Caco-2 (cell line): ENCODE measurements at regions of chr5 and their contacts with region 1.

Region 1: DNA sequence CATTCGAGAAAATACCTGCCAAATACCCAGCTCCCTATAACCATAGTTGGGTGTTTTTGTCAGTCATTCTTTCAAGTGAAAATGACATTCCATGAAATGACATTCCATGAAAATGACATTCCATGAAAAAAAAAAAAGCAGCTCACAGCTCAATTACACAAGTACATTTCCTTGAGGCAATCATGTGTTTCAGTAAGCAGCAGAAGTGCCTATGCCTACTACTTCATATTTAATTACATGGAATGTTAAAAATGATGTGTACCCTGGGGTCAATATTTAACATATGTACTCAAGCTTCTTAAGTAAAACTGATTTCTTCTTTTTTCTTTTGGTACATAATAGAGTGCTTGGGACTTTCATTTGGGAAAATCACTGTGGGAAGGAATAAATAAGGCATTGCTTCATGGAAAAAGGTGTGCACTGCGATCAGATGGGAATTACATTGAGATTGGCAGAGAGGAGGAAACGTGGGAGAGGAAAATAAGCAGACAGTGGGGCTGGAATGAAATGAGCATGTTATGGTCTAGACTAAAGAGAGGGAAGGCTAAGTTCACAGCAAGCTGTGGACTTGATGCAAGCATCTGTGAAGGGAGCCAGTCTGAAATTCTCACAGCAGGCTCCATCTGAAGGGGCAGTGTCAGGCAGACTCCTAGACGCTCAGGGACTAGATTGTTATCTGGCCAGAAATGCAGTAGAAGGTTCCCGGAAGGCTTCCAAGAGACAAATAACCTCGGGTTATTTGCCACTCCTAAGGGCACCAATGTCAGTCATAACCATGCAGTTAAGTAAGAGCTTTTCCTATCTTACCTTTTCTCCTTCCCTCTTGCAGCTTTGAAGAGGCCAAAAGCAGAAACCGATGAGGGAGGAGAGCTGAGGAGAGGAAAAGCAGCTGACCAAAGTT is 15.2 kb upstream of the SPATA9 start:
- DNase-seq: peak; percentile 51 to 65
- H3K4me3 ChIP-seq: no peak overlapping the region
- H3K4me3 Mint-ChIP-seq: no peak overlapping the region
- H3K27ac Mint-ChIP-seq: peak overlapping the region; percentile 17
- H3K4me1 ChIP-seq: peaks cover 25% of the 10 kb centered on the region
- H3K4me1 Mint-ChIP-seq: peaks cover 10% of the 10 kb centered on the region
- H3K27me3 ChIP-seq: no peaks in the 10 kb centered on the region
- H3K27me3 Mint-ChIP-seq: no peaks in the 10 kb centered on the region
- CTCF ChIP-seq: no peak

Region 2: GRCh38 chr5:95460662-95461061 is 237.4 kb before region 1 on chr5:
- CTCF ChIA-PET with region 1: no interaction called
- POLR2A ChIA-PET with region 1: no interaction called
- intact Hi-C with region 1: no loop called
- DNase-seq: no peak
- H3K4me3 ChIP-seq: no peak overlapping the region
- H3K4me3 Mint-ChIP-seq: no peak overlapping the region
- H3K27ac Mint-ChIP-seq: no peak overlapping the region
- H3K4me1 ChIP-seq: no peaks in the 10 kb centered on the region
- H3K4me1 Mint-ChIP-seq: no peaks in the 10 kb centered on the region
- H3K27me3 ChIP-seq: no peaks in the 10 kb centered on the region
- H3K27me3 Mint-ChIP-seq: no peaks in the 10 kb centered on the region
- CTCF ChIP-seq: no peak

Region 3: DNA sequence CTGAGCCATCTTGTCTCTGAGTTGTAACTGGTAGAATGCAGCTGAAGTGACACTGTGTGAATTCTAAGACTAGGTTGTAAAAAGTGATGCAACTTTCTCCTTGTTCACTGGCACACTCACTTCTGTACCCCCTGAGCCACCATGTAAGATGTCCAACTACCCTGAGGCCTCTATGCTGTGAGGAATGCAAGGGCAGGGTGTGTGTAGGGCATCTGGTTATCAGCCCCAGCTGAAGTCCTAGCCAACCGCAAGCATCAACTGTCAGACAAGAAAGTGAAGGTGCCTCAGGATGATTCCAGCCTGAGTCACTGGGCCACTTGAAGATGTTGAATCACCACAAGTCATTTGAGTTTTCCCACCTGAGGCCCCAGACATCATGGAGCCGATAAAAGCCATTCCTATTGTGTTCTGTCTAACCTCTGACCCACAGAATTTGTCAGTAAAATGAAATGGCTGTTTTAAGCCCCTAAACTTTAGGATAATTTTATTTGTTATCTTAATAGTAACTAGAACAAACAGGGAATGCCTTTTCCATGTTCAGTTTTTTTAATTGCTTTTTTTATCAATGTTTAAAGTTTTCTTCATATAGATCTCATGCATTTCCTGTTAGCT is 14.4 kb after region 1 on chr5:
- CTCF ChIA-PET with region 1: no interaction called
- POLR2A ChIA-PET with region 1: no interaction called
- intact Hi-C with region 1: loop called (anchors 2 kb)
- DNase-seq: peak; percentile 83 to 95
- H3K4me3 ChIP-seq: no peak overlapping the region
- H3K4me3 Mint-ChIP-seq: peak overlapping the region; percentile 52
- H3K27ac Mint-ChIP-seq: peak overlapping the region; percentile 98
- H3K4me1 ChIP-seq: peaks cover 61% of the 10 kb centered on the region
- H3K4me1 Mint-ChIP-seq: peaks cover 46% of the 10 kb centered on the region
- H3K27me3 ChIP-seq: no peaks in the 10 kb centered on the region
- H3K27me3 Mint-ChIP-seq: no peaks in the 10 kb centered on the region
- CTCF ChIP-seq: no peak